Left cardiac atrium (tissue), 4 donors: ENCODE measurements at regions of chr7 and their contacts with region 1.

Region 1: DNA sequence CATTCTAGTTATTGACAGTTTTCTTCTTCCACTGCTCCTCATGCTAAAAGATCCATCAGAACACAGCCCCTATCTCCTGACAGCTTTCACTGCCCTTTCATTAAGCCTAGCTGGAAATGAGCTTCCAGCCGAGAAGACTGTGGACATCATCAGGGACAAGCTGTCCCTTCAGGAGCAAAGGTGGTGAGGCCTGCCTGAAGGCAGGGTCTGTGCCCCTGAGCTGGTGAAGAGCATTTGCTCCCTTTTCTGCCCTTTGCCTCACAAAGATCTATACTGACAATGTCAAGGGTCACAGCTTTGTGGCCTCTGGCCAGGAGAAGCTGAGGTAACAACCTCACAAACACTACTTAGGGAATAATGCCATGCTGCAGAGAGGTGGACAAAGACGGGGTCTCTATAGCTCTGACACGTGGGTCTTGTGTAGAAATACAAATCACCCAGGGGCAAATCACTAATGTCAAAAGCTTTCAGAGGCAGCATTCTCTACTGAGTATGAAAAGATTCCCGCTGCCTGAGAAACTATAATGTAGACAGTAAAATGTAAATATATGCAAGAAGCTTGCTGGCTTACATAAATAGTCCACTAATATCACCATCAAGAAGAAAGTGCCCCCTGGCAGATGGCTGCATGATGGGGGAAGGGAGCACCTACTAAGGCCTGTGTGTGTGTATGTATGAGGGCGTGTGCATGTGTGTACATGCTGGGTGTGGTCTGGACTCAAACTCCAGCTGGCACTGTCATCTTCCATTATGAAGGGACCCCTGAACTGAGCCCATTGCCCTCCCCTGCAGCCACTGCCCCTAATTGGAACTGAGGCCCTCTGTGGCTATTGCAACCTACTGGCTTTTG is 55.8 kb downstream of the HBP1 start:
- DNase-seq: no peak
- ATAC-seq: peak; percentile 31

Region 2: DNA sequence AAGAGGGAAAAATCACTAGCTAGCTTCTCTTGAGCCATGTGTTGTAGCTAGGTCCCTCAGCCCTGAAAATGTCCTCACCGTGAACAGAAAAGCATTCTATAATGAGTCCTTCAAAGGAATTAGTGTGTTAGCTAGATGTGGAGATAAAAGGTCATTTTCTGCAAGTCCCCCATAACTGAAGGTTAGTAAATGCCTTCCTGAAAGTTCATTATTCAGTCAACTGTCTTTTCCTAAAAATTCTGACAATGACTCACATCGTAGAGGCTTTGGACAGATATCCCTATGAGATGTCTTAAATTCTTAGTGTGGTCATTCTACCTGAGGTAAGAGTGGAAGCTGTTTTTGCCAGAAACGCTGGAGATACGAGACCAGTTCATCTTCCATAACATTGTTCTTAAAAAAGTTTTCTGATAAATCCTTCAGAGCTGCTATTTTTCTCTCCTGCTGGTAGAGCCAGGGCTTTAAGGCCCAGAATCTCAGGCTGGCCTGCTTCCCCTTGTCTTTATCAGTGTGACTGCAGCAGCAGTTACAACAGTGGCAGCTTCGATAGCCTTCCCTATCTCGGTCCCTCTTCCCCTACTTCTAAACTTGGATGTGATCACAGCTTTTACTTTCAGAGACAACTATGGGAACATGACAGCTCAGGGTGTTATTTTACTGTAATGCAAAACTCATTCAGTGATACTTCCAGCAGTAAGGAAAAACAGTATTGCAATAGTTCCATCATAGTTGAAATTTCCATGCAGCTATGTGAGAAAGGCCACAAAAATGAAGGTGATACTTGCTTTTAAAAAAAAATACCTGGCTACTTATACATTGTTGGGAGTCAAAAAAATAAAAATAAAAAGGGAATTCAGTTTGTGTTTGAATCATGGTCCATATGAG is 217.3 kb before region 1 on chr7:
- intact Hi-C with region 1: no loop called
- DNase-seq: peak; percentile 48
- ATAC-seq: peak; percentile 96

Region 3: GRCh38 chr7:107284911-107285479 is 60.4 kb after region 1 on chr7:
- intact Hi-C with region 1: loop called in 1 of 2 experiments (anchors 5 kb)
- DNase-seq: no peak
- ATAC-seq: peak; percentile 62 to 87